ENCODE measurements at regions of chr2 and their contacts with region 1.

Region 1: GRCh38 chr2:200578778-200579177 is 7.0 kb upstream of the AOX1 start:
- DNase-seq: peak in 1 of 2 experiments; percentile 65
- H3K4me3 ChIP-seq: no peak overlapping the region
- H3K4me3 Mint-ChIP-seq: no peak overlapping the region
- H3K27ac Mint-ChIP-seq: no peak overlapping the region
- H3K4me1 ChIP-seq: peaks cover 6% of the 10 kb centered on the region; the same call in 1 of the 2 replicates
- H3K4me1 Mint-ChIP-seq: peaks cover 7% of the 10 kb centered on the region
- H3K27me3 ChIP-seq: no peaks in the 10 kb centered on the region
- H3K27me3 Mint-ChIP-seq: no peaks in the 10 kb centered on the region
- CTCF ChIP-seq: peak; percentile 68 to 76

Region 2: DNA sequence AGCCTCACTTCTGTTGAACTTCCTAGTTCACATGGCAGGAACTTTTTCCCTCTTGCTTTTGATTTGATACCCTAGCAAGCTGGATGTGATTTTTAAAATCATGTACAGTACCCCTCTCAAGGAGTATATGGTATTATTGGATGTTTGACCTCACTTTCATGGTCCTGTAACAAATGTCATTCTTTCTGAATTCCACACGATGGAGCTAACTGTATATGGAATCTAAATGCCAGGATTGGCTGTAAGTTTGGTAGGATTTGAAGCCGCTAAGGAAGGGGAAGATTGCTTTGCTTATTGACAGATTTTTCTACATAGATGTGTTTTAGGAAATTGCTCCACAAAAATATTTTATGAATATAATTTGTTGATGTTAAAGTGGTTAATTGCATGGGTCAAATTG is 605.1 kb before region 1 on chr2:
- CTCF ChIA-PET with region 1: no interaction called
- POLR2A ChIA-PET with region 1: no interaction called
- intact Hi-C with region 1: loop called (anchors 2 kb)
- DNase-seq: no peak
- H3K4me3 ChIP-seq: no peak overlapping the region
- H3K4me3 Mint-ChIP-seq: no peak overlapping the region
- H3K27ac Mint-ChIP-seq: no peak overlapping the region
- H3K4me1 ChIP-seq: peaks cover 14% of the 10 kb centered on the region
- H3K4me1 Mint-ChIP-seq: peaks cover 15% of the 10 kb centered on the region
- H3K27me3 ChIP-seq: no peaks in the 10 kb centered on the region
- H3K27me3 Mint-ChIP-seq: no peaks in the 10 kb centered on the region
- CTCF ChIP-seq: peak; percentile 46 to 76

Region 3: GRCh38 chr2:200454927-200455801 is 123.6 kb before region 1 on chr2:
- CTCF ChIA-PET with region 1: no interaction called
- POLR2A ChIA-PET with region 1: no interaction called
- intact Hi-C with region 1: no loop called
- DNase-seq: no peak
- H3K4me3 ChIP-seq: no peak overlapping the region
- H3K4me3 Mint-ChIP-seq: no peak overlapping the region
- H3K27ac Mint-ChIP-seq: no peak overlapping the region
- H3K4me1 ChIP-seq: no peaks in the 10 kb centered on the region
- H3K4me1 Mint-ChIP-seq: peaks cover 12% of the 10 kb centered on the region
- H3K27me3 ChIP-seq: no peaks in the 10 kb centered on the region
- H3K27me3 Mint-ChIP-seq: no peaks in the 10 kb centered on the region
- CTCF ChIP-seq: no peak

Region 4: GRCh38 chr2:200618587-200619021 is 39.8 kb after region 1 on chr2:
- CTCF ChIA-PET with region 1: interaction called, 6 read pairs
- POLR2A ChIA-PET with region 1: no interaction called
- intact Hi-C with region 1: loop called (anchors 2 kb)
- DNase-seq: peak in 1 of 2 experiments; percentile 30
- H3K4me3 ChIP-seq: no peak overlapping the region
- H3K4me3 Mint-ChIP-seq: no peak overlapping the region
- H3K27ac Mint-ChIP-seq: no peak overlapping the region
- H3K4me1 ChIP-seq: no peaks in the 10 kb centered on the region
- H3K4me1 Mint-ChIP-seq: peaks cover 7% of the 10 kb centered on the region
- H3K27me3 ChIP-seq: no peaks in the 10 kb centered on the region
- H3K27me3 Mint-ChIP-seq: no peaks in the 10 kb centered on the region
- CTCF ChIP-seq: peak in 1 of 2 experiments; percentile 55

Region 5: GRCh38 chr2:200670313-200670712 is 91.5 kb after region 1 on chr2:
- CTCF ChIA-PET with region 1: interaction called, 4 read pairs
- POLR2A ChIA-PET with region 1: no interaction called
- intact Hi-C with region 1: loop called (anchors 1 kb)
- DNase-seq: peak in 1 of 2 experiments; percentile 13
- H3K4me3 ChIP-seq: no peak overlapping the region
- H3K4me3 Mint-ChIP-seq: no peak overlapping the region
- H3K27ac Mint-ChIP-seq: no peak overlapping the region
- H3K4me1 ChIP-seq: peaks cover 16% of the 10 kb centered on the region
- H3K4me1 Mint-ChIP-seq: no peaks in the 10 kb centered on the region
- H3K27me3 ChIP-seq: no peaks in the 10 kb centered on the region
- H3K27me3 Mint-ChIP-seq: no peaks in the 10 kb centered on the region
- CTCF ChIP-seq: peak; percentile 15 to 18

Region 6: GRCh38 chr2:200735061-200735460 is 156.3 kb after region 1 on chr2:
- CTCF ChIA-PET with region 1: interaction called, 5 read pairs
- POLR2A ChIA-PET with region 1: no interaction called
- intact Hi-C with region 1: loop called (anchors 1 kb)
- DNase-seq: no peak
- H3K4me3 ChIP-seq: no peak overlapping the region
- H3K4me3 Mint-ChIP-seq: no peak overlapping the region
- H3K27ac Mint-ChIP-seq: no peak overlapping the region
- H3K4me1 ChIP-seq: no peaks in the 10 kb centered on the region; the same call in 1 of the 2 replicates
- H3K4me1 Mint-ChIP-seq: peaks cover 8% of the 10 kb centered on the region
- H3K27me3 ChIP-seq: no peaks in the 10 kb centered on the region; the same call in 1 of the 2 replicates
- H3K27me3 Mint-ChIP-seq: no peaks in the 10 kb centered on the region
- CTCF ChIP-seq: no peak

Measured in Caco-2 (cell line).